Activated naive CD4-positive, alpha-beta T cell treated with anti-CD3 and anti-CD28 coated beads for 36 hours (primary cell): ENCODE measurements at regions of chr2 and their contacts with region 1.

Region 1: DNA sequence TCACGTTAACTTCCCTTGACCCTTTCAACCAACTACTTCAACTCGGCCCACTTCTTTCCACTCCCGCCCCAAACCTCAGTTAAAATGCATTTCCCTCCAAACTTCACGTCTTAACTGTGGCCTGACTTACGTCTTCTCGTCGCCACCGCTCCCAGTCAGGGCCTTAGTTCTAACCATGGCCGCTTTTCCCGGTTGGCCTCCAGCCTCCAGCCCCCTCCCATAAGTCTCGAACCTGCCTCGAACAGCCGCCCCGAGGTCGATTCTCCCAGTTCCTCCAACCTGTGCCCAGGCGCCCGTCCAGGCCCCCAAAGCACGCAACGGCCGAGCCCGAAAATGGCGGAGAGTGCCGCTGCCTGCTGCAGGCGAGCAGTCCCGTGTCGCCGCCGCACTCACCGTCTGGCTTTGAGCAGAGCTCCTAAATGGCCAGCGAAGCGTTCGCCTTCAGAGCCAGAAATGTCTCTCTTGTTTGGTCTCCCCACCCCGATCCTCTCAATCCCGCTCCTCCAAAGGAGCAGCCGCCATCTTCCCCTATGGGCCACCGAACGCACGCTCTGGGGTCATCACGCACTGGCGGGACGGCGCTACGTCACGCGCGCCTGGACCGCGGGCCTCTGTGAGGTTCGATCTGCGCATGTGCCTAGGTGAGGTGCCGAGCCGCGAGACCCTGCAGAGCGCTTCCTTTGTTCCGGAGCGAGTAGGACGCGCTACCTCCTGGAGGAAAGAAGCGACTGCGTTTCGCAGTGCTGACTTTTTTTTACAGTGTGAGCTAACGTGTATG is at the start of gene WDR33:
- DNase-seq: peak; percentile 97
- H3K4me3 Mint-ChIP-seq: peak within 1 kb of the TSS; percentile 94
- H3K27ac Mint-ChIP-seq: peak within 1 kb of the TSS; percentile 97
- H3K4me1 Mint-ChIP-seq: peaks cover 41% of the 10 kb centered on the region
- H3K27me3 Mint-ChIP-seq: no peaks in the 10 kb centered on the region
- total RNA-seq, gene WDR33: 61.1 to 63.2 TPM

Region 2: GRCh38 chr2:127640082-127641072 is 170.4 kb before region 1 on chr2:
- CTCF ChIA-PET with region 1: no interaction called
- intact Hi-C with region 1: loop called (anchors 2 kb)
- DNase-seq: peak; percentile 65
- H3K4me3 Mint-ChIP-seq: peak overlapping the region; percentile 65
- H3K27ac Mint-ChIP-seq: peak overlapping the region; percentile 71
- H3K4me1 Mint-ChIP-seq: peaks cover 54% of the 10 kb centered on the region
- H3K27me3 Mint-ChIP-seq: no peaks in the 10 kb centered on the region

Region 3: GRCh38 chr2:127664065-127664894 is 146.5 kb before region 1 on chr2:
- CTCF ChIA-PET with region 1: no interaction called
- intact Hi-C with region 1: no loop called
- DNase-seq: no peak
- H3K4me3 Mint-ChIP-seq: no peak overlapping the region
- H3K27ac Mint-ChIP-seq: no peak overlapping the region
- H3K4me1 Mint-ChIP-seq: no peaks in the 10 kb centered on the region
- H3K27me3 Mint-ChIP-seq: peaks cover 45% of the 10 kb centered on the region

Region 4: GRCh38 chr2:127701193-127701650 is 109.6 kb before region 1 on chr2 and contains the start of gene SFT2D3:
- CTCF ChIA-PET with region 1: interaction called, 3 read pairs
- intact Hi-C with region 1: loop called (anchors 1 kb)
- DNase-seq: peak; percentile 94
- H3K4me3 Mint-ChIP-seq: peak within 1 kb of the TSS; percentile 88
- H3K27ac Mint-ChIP-seq: peak within 1 kb of the TSS; percentile 95
- H3K4me1 Mint-ChIP-seq: peaks cover 38% of the 10 kb centered on the region
- H3K27me3 Mint-ChIP-seq: no peaks in the 10 kb centered on the region
- total RNA-seq, gene SFT2D3: 3.1 to 3.3 TPM

Region 5: DNA sequence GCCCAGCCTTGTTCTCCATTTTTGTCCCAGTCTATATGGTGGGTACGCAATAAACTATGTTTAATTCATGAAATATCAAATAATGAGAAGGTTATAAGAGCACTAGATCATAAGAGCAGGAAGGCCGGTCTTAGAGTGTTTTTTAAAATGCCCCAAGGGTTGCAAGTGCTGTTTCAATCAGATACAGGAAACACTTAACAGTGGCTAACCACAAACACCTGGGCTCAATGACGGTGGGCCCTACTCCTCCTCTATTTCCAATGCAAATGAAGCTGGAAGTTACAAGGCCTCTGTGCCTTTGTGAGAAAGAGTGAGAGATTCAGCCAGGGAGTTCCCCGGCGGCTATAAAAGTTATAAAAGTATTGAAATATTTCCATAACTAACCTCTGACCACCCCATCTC is 19.0 kb after region 1 on chr2:
- CTCF ChIA-PET with region 1: no interaction called
- intact Hi-C with region 1: loop called (anchors 1 kb)
- DNase-seq: peak; percentile 91
- H3K4me3 Mint-ChIP-seq: no peak overlapping the region
- H3K27ac Mint-ChIP-seq: peak overlapping the region; percentile 78
- H3K4me1 Mint-ChIP-seq: peaks cover 25% of the 10 kb centered on the region
- H3K27me3 Mint-ChIP-seq: no peaks in the 10 kb centered on the region

Region 6: GRCh38 chr2:127884436-127885345 is 73.9 kb after region 1 on chr2:
- CTCF ChIA-PET with region 1: no interaction called
- intact Hi-C with region 1: loop called (anchors 2 kb)
- DNase-seq: no peak
- H3K4me3 Mint-ChIP-seq: peak overlapping the region; percentile 86
- H3K27ac Mint-ChIP-seq: peak overlapping the region; percentile 71
- H3K4me1 Mint-ChIP-seq: peaks cover 60% of the 10 kb centered on the region
- H3K27me3 Mint-ChIP-seq: no peaks in the 10 kb centered on the region

Region 7: GRCh38 chr2:128115921-128116623 is 305.3 kb after region 1 on chr2:
- CTCF ChIA-PET with region 1: no interaction called
- intact Hi-C with region 1: no loop called
- DNase-seq: no peak
- H3K4me3 Mint-ChIP-seq: no peak overlapping the region
- H3K27ac Mint-ChIP-seq: no peak overlapping the region
- H3K4me1 Mint-ChIP-seq: no peaks in the 10 kb centered on the region
- H3K27me3 Mint-ChIP-seq: no peaks in the 10 kb centered on the region